Right ventricle myocardium inferior (tissue), 1 donor: ENCODE measurements at regions of chr18 and their contacts with region 1.

Region 1: DNA sequence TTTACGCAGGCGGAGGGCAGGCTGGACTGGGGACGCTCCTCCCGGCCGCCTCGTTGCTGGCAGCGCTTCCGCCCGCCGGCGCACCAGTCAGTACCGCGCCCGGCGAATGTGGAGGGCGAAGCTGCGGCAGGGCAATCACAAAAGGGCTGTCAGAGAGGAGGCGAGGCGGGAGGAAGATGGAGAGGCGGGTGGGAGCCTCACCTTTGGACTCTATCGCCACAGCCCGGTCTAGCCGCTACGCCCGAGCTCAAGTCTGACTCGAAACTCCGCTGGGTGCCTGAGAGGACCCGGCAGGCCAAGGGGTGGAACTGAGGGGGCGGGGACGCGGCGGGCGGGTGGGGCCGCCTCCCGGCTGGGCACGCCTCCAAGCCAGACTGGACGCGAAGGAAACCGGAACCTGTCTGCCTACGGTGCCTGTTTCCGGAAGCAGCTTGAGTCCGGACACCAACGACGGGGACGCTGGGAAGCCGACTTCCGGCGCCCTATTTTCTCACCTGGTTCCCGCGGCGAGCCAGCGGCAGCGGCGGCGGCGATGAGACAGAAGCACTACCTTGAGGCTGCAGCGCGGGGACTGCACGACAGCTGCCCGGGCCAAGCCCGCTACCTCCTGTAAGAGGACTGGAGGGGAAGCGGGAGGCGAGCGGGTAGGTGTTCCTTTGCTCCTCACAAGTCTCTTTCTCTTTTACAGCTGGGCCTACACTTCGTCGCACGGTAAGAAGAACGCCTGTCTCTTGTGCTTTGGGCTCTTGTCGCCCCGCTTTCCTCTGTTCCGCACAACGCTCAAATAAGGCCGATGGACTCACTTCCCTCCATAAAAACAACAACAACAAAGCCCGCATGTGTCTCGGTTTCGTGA is at the start of gene RMP24:
- DNase-seq: peak; percentile 97
- ATAC-seq: peak; percentile 97

Region 2: GRCh38 chr18:36067055-36067957 is 94.9 kb after region 1 on chr18 and contains the start of gene RPRD1A:
- intact Hi-C with region 1: loop called (anchors 2 kb)
- DNase-seq: peak; percentile 99
- ATAC-seq: peak; percentile 96
- total RNA-seq, gene RPRD1A: 45.5 TPM